Activated naive CD8-positive, alpha-beta T cell treated with anti-CD3 and anti-CD28 coated beads, Interleukin-2, amount 10 ng/mL, durations not matched to agents 7 days and 5 days (primary cell): ENCODE measurements at regions of chr1 and their contacts with region 1.

Region 1: DNA sequence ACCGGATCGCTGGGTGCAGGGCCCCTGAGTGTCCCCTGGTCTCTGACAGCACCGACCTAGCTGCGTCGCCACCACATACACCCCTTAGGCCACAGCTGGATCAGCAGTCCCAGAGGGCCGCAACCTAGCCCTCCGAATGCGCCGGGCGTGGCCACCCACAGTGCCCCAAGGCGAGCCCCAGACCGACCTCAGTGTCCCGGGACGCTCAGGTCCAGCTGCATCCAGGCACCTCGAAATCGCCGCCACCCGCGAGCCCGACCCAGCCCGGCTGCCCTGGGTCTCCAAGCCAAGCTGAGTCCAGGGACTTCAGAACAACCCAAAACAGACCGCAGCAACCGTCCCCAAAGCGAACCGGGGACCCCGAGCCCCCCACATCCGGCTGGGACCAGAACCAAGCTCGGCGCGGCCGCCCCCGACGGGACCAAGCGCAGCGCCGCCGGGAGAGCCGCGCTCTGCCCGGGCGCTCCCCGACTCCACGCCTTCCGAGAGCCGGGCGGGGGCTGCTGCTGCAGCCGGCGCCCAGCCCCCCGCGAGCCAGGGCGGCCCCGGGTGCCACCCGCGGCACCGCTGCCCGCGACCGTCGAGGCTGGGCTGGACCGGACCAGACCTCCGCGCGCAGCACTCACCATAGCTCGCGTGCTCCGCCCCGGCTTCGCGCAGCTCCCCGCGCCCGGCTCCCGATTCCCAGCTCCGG is 54.6 kb upstream of the ECE1 start:
- DNase-seq: no peak
- ATAC-seq: peak; percentile 27
- H3K4me3 Mint-ChIP-seq: peak overlapping the region; percentile 76
- H3K27ac Mint-ChIP-seq: peak overlapping the region; percentile 93
- H3K4me1 Mint-ChIP-seq: peaks cover 37% of the 10 kb centered on the region
- H3K27me3 Mint-ChIP-seq: no peaks in the 10 kb centered on the region

Region 2: GRCh38 chr1:20786253-20787028 is 558.5 kb before region 1 on chr1:
- POLR2A ChIA-PET with region 1: interaction called, 17 read pairs
- DNase-seq: peak; percentile 98
- ATAC-seq: peak; percentile 85
- H3K4me3 Mint-ChIP-seq: peak overlapping the region; percentile 86
- H3K27ac Mint-ChIP-seq: peak overlapping the region; percentile 99
- H3K4me1 Mint-ChIP-seq: peaks cover 24% of the 10 kb centered on the region
- H3K27me3 Mint-ChIP-seq: peaks cover 5% of the 10 kb centered on the region

Region 3: GRCh38 chr1:21280011-21280471 is 64.9 kb before region 1 on chr1:
- POLR2A ChIA-PET with region 1: interaction called, 11 read pairs
- DNase-seq: no peak
- ATAC-seq: peak; percentile 81
- H3K4me3 Mint-ChIP-seq: peak overlapping the region; percentile 78
- H3K27ac Mint-ChIP-seq: peak overlapping the region; percentile 93
- H3K4me1 Mint-ChIP-seq: peaks cover 40% of the 10 kb centered on the region
- H3K27me3 Mint-ChIP-seq: no peaks in the 10 kb centered on the region

Region 4: GRCh38 chr1:21294266-21294989 is 50.5 kb before region 1 on chr1:
- POLR2A ChIA-PET with region 1: interaction called, 80 read pairs
- DNase-seq: peak; percentile 73
- ATAC-seq: peak; percentile 75
- H3K4me3 Mint-ChIP-seq: peak overlapping the region; percentile 77
- H3K27ac Mint-ChIP-seq: peak overlapping the region; percentile 90
- H3K4me1 Mint-ChIP-seq: peaks cover 69% of the 10 kb centered on the region
- H3K27me3 Mint-ChIP-seq: no peaks in the 10 kb centered on the region

Region 5: GRCh38 chr1:21324368-21325141 is 20.3 kb before region 1 on chr1:
- POLR2A ChIA-PET with region 1: interaction called, 12 read pairs
- DNase-seq: peak; percentile 45
- ATAC-seq: peak; percentile 68
- H3K4me3 Mint-ChIP-seq: peak overlapping the region; percentile 72
- H3K27ac Mint-ChIP-seq: peak overlapping the region; percentile 77
- H3K4me1 Mint-ChIP-seq: peaks cover 57% of the 10 kb centered on the region
- H3K27me3 Mint-ChIP-seq: no peaks in the 10 kb centered on the region

Region 6: GRCh38 chr1:21334214-21335087 is 10.4 kb before region 1 on chr1:
- POLR2A ChIA-PET with region 1: interaction called, 51 read pairs
- DNase-seq: peak; percentile 81
- ATAC-seq: peak; percentile 93
- H3K4me3 Mint-ChIP-seq: peak overlapping the region; percentile 82
- H3K27ac Mint-ChIP-seq: peak overlapping the region; percentile 91
- H3K4me1 Mint-ChIP-seq: peaks cover 73% of the 10 kb centered on the region
- H3K27me3 Mint-ChIP-seq: no peaks in the 10 kb centered on the region